AG04450 (cell line): ENCODE measurements at regions of chr16 and their contacts with region 1.

Region 1: GRCh38 chr16:3129137-3130131 is 5.4 kb upstream of the ZNF213 start:
- DNase-seq: peak; percentile 70
- H3K4me3 ChIP-seq: peak overlapping the region; percentile 49
- H3K27ac ChIP-seq: peak overlapping the region; percentile 61
- H3K27me3 ChIP-seq: no peaks in the 10 kb centered on the region
- CTCF ChIP-seq: peak; percentile 95

Region 2: GRCh38 chr16:3113765-3114479 is 15.5 kb before region 1 on chr16:
- CTCF ChIA-PET with region 1: interaction called, 32 read pairs
- POLR2A ChIA-PET with region 1: interaction called, 4 read pairs
- DNase-seq: no peak
- H3K4me3 ChIP-seq: peak overlapping the region; percentile 96
- H3K27ac ChIP-seq: no peak overlapping the region
- H3K27me3 ChIP-seq: no peaks in the 10 kb centered on the region
- CTCF ChIP-seq: no peak